ENCODE measurements at regions of chr6 and their contacts with region 1.

Region 1: DNA sequence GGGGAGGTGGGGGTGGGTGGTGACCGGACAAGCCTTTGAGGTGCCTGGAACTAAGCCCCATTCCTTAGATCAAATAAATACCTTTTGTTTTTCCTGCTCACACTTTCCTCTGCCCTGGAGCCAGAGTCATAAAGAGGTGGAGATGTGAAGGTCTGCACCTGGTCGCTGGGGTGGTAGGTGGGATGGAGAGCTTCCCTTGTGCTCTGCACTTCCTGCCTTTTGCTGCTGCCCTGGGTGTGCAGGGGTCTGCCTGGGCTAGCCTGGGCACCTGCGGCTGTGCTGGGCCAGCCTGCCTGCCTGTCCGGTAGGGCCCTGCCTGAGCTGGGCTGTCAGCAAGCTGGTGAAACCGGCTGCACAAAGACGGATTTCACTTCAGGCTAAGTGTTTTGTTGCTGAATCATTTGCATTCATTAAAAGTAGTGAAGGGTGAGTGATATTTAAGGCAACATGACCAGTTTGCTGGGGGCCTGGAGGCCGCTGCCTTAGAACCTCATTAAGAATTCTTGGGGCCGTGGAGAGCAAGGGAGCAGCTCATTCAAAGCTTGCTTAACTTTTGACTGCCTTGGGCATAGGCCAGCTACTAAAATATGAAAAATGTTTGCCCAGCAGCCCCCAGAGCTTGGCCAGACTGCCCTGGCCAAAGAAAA is 20.5 kb downstream of the PTK7 start:
- DNase-seq: no peak
- ATAC-seq: no peak
- H3K4me3 ChIP-seq: no peak overlapping the region
- H3K4me3 Mint-ChIP-seq: no peak overlapping the region
- H3K27ac ChIP-seq: no peak overlapping the region
- H3K27ac Mint-ChIP-seq: no peak overlapping the region
- H3K4me1 ChIP-seq: no peaks in the 10 kb centered on the region
- H3K4me1 Mint-ChIP-seq: peaks cover 11% of the 10 kb centered on the region
- H3K27me3 ChIP-seq: no peaks in the 10 kb centered on the region
- H3K27me3 Mint-ChIP-seq: no peaks in the 10 kb centered on the region
- CTCF ChIP-seq: no peak

Region 2: GRCh38 chr6:43070028-43070632 is 26.4 kb before region 1 on chr6:
- CTCF ChIA-PET with region 1: no interaction called
- POLR2A ChIA-PET with region 1: no interaction called
- intact Hi-C with region 1: loop called in 1 of 2 experiments (anchors 2 kb)
- DNase-seq: peak in 2 of 9 experiments; percentile 55 to 72
- ATAC-seq: peak; percentile 78
- H3K4me3 ChIP-seq: no peak overlapping the region
- H3K4me3 Mint-ChIP-seq: no peak overlapping the region
- H3K27ac ChIP-seq: no peak overlapping the region
- H3K27ac Mint-ChIP-seq: no peak overlapping the region
- H3K4me1 ChIP-seq: no peaks in the 10 kb centered on the region
- H3K4me1 Mint-ChIP-seq: peaks cover 2% of the 10 kb centered on the region
- H3K27me3 ChIP-seq: no peaks in the 10 kb centered on the region
- H3K27me3 Mint-ChIP-seq: no peaks in the 10 kb centered on the region
- CTCF ChIP-seq: peak; percentile 62

Region 3: GRCh38 chr6:43081043-43081442 is 15.5 kb before region 1 on chr6:
- CTCF ChIA-PET with region 1: no interaction called
- POLR2A ChIA-PET with region 1: no interaction called
- intact Hi-C with region 1: no loop called
- DNase-seq: no peak
- ATAC-seq: no peak
- H3K4me3 ChIP-seq: no peak overlapping the region
- H3K4me3 Mint-ChIP-seq: no peak overlapping the region
- H3K27ac ChIP-seq: no peak overlapping the region
- H3K27ac Mint-ChIP-seq: no peak overlapping the region
- H3K4me1 ChIP-seq: peaks cover 11% of the 10 kb centered on the region
- H3K4me1 Mint-ChIP-seq: peaks cover 10% of the 10 kb centered on the region
- H3K27me3 ChIP-seq: peaks cover 5 to 11% of the 10 kb centered on the region in 2 experiments
- H3K27me3 Mint-ChIP-seq: peaks cover 13% of the 10 kb centered on the region
- CTCF ChIP-seq: no peak

Region 4: GRCh38 chr6:43159599-43159998 is 63.0 kb after region 1 on chr6:
- CTCF ChIA-PET with region 1: no interaction called
- POLR2A ChIA-PET with region 1: no interaction called
- intact Hi-C with region 1: no loop called
- DNase-seq: no peak
- ATAC-seq: no peak
- H3K4me3 ChIP-seq: no peak overlapping the region
- H3K4me3 Mint-ChIP-seq: no peak overlapping the region
- H3K27ac ChIP-seq: no peak overlapping the region
- H3K27ac Mint-ChIP-seq: no peak overlapping the region
- H3K4me1 ChIP-seq: no peaks in the 10 kb centered on the region
- H3K4me1 Mint-ChIP-seq: no peaks in the 10 kb centered on the region
- H3K27me3 ChIP-seq: no peaks in the 10 kb centered on the region
- H3K27me3 Mint-ChIP-seq: no peaks in the 10 kb centered on the region
- CTCF ChIP-seq: no peak

Region 5: GRCh38 chr6:43181942-43182860 is 85.6 kb after region 1 on chr6 and contains the start of gene CUL9:
- CTCF ChIA-PET with region 1: no interaction called
- POLR2A ChIA-PET with region 1: no interaction called
- intact Hi-C with region 1: no loop called
- DNase-seq: peak; percentile 48 to 91 (median 80)
- ATAC-seq: peak; percentile 91
- H3K4me3 ChIP-seq: peak within 1 kb of the TSS; percentile 62 to 69
- H3K4me3 Mint-ChIP-seq: peak within 1 kb of the TSS; percentile 93
- H3K27ac ChIP-seq: peak within 1 kb of the TSS; percentile 65
- H3K27ac Mint-ChIP-seq: peak within 1 kb of the TSS; percentile 95
- H3K4me1 ChIP-seq: peaks cover 51% of the 10 kb centered on the region
- H3K4me1 Mint-ChIP-seq: peaks cover 49% of the 10 kb centered on the region
- H3K27me3 ChIP-seq: no peaks in the 10 kb centered on the region
- H3K27me3 Mint-ChIP-seq: no peaks in the 10 kb centered on the region
- CTCF ChIP-seq: no peak
- total RNA-seq, gene CUL9: 72.0 to 77.2 TPM

Region 6: GRCh38 chr6:44569931-44570385 is 1473.4 kb after region 1 on chr6:
- CTCF ChIA-PET with region 1: no interaction called
- POLR2A ChIA-PET with region 1: no interaction called
- intact Hi-C with region 1: no loop called
- DNase-seq: no peak
- ATAC-seq: no peak
- H3K4me3 ChIP-seq: no peak overlapping the region
- H3K4me3 Mint-ChIP-seq: no peak overlapping the region
- H3K27ac ChIP-seq: no peak overlapping the region
- H3K27ac Mint-ChIP-seq: no peak overlapping the region
- H3K4me1 ChIP-seq: no peaks in the 10 kb centered on the region
- H3K4me1 Mint-ChIP-seq: no peaks in the 10 kb centered on the region
- H3K27me3 ChIP-seq: no peaks in the 10 kb centered on the region
- H3K27me3 Mint-ChIP-seq: peaks cover 10% of the 10 kb centered on the region
- CTCF ChIP-seq: no peak

Measured in CD8-positive, alpha-beta T cell (primary cell).